Calu3 (cell line): ENCODE measurements at regions of chr16 and their contacts with region 1.

Region 1: DNA sequence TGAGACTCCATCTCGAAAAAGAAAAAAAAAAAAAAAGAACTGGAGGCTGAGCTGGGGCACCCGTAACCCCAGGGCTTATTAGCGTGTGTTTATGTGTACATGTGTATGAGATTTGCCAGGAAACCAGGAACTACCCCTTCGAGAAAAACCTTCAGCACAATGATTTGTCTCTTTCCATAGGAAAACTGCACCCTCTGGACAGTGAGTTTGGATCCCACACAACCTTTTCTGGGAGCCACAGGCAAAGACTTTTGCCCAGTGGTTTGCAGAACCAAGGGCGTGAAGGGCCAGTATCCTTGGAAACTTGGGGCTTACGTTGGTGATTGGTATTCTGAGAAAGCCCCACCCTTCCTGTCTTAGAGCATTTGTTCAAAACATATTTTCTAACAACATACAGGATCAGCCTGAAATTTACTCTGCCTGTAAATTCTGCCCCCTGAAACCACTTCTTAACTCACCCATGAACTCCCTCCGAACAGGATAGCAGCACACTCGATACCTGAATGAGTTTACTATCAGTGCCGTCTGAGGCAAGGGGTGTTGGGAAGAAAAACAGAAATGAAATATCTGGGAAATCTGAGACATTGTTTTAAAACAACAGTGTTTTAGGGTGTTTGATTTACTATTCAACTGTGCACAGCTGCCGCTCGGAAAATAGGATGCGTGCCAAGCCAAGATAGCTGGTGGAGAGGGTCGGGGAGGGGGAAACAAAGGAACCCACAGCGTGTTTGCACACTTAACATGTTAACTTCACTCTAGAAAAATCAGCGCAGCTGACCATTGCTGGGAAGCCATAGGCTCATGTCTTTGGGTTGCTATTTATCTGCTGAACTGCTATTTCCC is 40.2 kb upstream of the MAF start:
- DNase-seq: no peak
- H3K4me3 Mint-ChIP-seq: peak overlapping the region; percentile 52
- H3K27ac Mint-ChIP-seq: peak overlapping the region; percentile 97
- H3K4me1 Mint-ChIP-seq: peaks cover 53% of the 10 kb centered on the region
- H3K27me3 Mint-ChIP-seq: no peaks in the 10 kb centered on the region
- CTCF ChIP-seq: no peak

Region 2: DNA sequence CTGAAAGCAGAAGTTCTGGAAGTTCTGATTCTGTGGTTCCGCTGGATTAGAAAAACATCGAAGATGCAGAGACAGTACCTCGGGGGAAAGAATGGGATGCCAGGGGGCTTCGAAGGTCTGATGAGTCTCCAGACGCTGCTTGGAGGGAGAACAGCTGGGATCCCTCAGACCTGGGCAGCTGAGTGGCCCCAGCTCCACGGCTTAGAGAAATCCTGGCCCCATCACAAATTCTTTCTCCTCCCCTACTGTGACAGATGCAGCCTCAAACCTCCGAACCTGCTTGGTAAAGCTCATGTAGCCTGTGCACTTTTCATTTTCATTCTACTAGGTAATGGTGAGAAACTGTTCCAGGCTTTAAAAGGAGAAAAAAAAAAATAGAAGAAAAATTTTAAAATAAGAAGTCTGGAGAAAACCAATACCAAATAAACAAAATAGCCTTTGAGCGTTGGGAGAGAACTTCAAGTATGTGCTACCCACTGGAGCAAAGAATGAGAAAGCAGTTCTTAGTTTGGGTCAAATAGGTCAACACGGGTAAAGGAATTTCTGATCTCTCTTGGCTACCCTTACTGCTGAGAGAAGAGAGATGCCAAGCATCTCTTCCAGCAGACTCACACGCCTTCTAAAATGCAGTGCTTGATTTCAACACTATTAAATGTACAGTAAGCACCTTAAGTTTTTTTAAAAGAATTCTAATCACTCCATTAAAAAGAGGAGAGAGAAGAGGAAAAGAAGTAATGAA is 60.1 kb before region 1 on chr16:
- CTCF ChIA-PET with region 1: no interaction called
- intact Hi-C with region 1: no loop called
- DNase-seq: no peak
- H3K4me3 Mint-ChIP-seq: no peak overlapping the region
- H3K27ac Mint-ChIP-seq: no peak overlapping the region
- H3K4me1 Mint-ChIP-seq: no peaks in the 10 kb centered on the region
- H3K27me3 Mint-ChIP-seq: peaks cover 90% of the 10 kb centered on the region
- CTCF ChIP-seq: no peak

Region 3: GRCh38 chr16:79651363-79651762 is 10.6 kb after region 1 on chr16:
- CTCF ChIA-PET with region 1: interaction called, 14 read pairs
- intact Hi-C with region 1: loop called (anchors 1 kb)
- DNase-seq: peak; percentile 81
- H3K4me3 Mint-ChIP-seq: no peak overlapping the region
- H3K27ac Mint-ChIP-seq: peak overlapping the region; percentile 17
- H3K4me1 Mint-ChIP-seq: peaks cover 18% of the 10 kb centered on the region
- H3K27me3 Mint-ChIP-seq: no peaks in the 10 kb centered on the region
- CTCF ChIP-seq: no peak

Region 4: DNA sequence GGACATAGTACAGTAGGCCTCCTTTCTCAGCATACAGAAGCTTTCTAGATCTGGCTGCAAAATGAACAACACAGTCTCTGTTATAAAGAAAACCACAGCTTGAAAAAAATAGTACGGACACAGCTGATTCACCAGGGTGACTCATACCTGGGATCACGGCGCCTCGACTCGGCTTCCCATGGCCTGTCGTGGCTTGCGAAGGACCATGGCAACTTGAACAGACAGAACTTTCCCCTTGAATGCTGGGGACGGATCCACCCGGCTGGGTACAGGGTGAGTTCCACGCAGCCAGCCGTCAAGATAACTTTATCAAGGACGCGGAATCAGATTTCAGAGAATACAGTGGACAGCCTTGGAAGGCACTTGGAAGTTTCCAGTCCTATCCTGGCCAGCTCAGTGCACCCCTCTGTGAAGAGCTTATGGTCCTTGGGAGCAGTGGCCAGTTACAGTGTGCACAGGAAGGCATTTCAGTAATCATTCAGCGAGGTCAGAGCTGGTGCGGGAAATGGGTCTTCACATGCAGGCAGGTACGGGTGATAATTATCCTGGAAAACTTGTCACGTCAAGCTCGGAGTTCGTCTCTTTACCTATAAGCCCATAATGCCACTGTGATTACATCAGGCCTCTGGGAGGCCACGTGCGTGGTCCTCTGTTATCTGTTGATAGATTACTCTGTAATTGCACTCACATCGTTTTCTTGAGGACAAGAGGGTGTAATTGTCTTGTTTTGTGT is 17.7 kb after region 1 on chr16:
- CTCF ChIA-PET with region 1: interaction called, 20 read pairs
- intact Hi-C with region 1: loop called (anchors 2 kb)
- DNase-seq: peak; percentile 84
- H3K4me3 Mint-ChIP-seq: no peak overlapping the region
- H3K27ac Mint-ChIP-seq: peak overlapping the region; percentile 74
- H3K4me1 Mint-ChIP-seq: peaks cover 27% of the 10 kb centered on the region
- H3K27me3 Mint-ChIP-seq: no peaks in the 10 kb centered on the region
- CTCF ChIP-seq: no peak